Caco-2 (cell line): ENCODE measurements at regions of chr10 and their contacts with region 1.

Region 1: DNA sequence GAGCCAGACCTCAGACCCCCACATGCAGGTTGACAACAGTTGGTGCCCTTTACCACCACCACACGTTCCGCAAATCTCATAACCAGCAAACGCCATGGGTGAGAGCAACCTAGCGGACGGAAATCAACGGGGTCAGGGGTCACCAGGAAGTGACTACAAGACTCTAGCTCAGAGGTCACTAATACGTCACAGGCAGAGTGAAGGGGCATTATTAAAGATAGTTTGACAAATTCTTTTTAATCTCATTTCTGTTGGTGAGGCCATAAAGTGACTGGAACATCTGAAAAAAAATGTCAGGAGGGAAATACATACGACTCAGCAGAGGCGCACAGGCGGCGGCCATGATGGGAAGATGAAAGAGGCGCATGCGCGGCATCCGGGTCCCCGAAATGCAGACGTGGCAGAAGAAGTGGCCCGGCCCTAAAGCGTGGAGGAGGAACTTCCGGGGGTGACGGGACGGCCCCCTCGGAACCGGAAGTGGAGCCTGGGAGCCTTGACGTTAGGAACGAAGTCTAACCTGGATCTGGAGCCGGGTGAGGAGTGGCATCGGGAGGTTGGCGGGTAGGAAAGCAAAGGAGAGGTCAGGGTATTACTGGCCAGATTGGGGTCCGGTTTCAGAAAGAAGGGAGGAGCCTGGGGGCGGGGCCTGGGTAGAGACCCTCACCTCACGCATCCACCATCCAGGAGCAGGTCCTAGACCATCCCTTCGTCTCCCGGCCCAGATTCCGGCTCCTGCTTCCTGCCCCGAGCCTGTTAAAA is at the start of gene SEC24C:
- DNase-seq: peak; percentile 97
- H3K4me3 ChIP-seq: peak within 1 kb of the TSS; percentile 59
- H3K4me3 Mint-ChIP-seq: peak within 1 kb of the TSS; percentile 97
- H3K27ac Mint-ChIP-seq: peak within 1 kb of the TSS; percentile 99
- H3K4me1 ChIP-seq: peaks cover 6% of the 10 kb centered on the region; the same call in 1 of the 2 replicates
- H3K4me1 Mint-ChIP-seq: peaks cover 6% of the 10 kb centered on the region
- H3K27me3 ChIP-seq: no peaks in the 10 kb centered on the region
- H3K27me3 Mint-ChIP-seq: no peaks in the 10 kb centered on the region
- CTCF ChIP-seq: no peak
- total RNA-seq, gene SEC24C: 91.0 and 91.2 TPM in 2 replicates

Region 2: GRCh38 chr10:73730153-73730906 is 13.8 kb before region 1 on chr10:
- CTCF ChIA-PET with region 1: no interaction called
- POLR2A ChIA-PET with region 1: interaction called, 11 read pairs
- intact Hi-C with region 1: loop called (anchors 1 kb)
- DNase-seq: peak; percentile 91 to 95
- H3K4me3 ChIP-seq: peak overlapping the region; percentile 98
- H3K4me3 Mint-ChIP-seq: peak overlapping the region; percentile 88
- H3K27ac Mint-ChIP-seq: peak overlapping the region; percentile 94
- H3K4me1 ChIP-seq: no peaks in the 10 kb centered on the region
- H3K4me1 Mint-ChIP-seq: no peaks in the 10 kb centered on the region
- H3K27me3 ChIP-seq: no peaks in the 10 kb centered on the region
- H3K27me3 Mint-ChIP-seq: no peaks in the 10 kb centered on the region
- CTCF ChIP-seq: no peak

Region 3: DNA sequence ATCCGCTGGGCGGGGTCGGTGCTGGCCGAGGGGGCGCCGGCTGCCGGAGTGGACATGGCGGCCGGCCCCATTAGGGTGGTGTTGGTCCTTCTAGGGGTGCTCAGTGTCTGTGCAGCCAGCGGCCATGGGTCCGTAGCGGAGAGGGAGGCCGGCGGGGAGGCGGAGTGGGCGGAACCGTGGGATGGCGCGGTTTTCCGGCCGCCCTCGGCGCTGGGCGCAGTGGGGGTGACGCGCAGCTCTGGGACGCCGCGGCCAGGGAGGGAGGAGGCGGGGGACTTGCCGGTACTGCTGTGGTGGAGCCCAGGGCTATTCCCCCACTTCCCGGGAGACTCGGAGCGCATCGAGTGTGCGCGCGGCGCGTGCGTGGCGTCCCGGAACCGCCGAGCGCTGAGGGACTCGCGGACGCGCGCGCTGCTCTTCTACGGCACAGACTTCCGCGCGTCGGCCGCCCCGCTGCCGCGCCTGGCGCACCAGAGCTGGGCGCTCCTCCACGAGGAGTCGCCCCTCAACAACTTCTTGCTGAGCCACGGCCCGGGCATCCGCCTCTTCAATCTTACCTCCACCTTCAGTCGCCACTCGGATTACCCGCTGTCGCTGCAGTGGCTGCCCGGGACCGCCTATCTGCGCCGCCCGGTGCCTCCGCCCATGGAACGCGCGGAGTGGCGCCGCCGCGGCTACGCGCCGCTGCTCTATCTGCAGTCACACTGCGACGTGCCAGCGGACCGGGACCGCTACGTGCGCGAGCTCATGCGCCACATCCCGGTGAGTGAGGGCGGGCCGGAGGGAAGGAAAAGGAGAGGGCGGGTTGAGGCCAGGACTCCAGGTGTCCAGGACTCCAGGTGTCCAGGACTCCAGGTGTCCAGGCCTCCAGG is 28.4 kb after region 1 on chr10:
- CTCF ChIA-PET with region 1: no interaction called
- POLR2A ChIA-PET with region 1: interaction called, 6 read pairs
- intact Hi-C with region 1: loop called (anchors 2 kb)
- DNase-seq: peak; percentile 84 to 85
- H3K4me3 ChIP-seq: peak overlapping the region; percentile 91
- H3K4me3 Mint-ChIP-seq: peak overlapping the region; percentile 82
- H3K27ac Mint-ChIP-seq: peak overlapping the region; percentile 75
- H3K4me1 ChIP-seq: peaks cover 7% of the 10 kb centered on the region; the same call in 1 of the 2 replicates
- H3K4me1 Mint-ChIP-seq: peaks cover 21% of the 10 kb centered on the region
- H3K27me3 ChIP-seq: no peaks in the 10 kb centered on the region
- H3K27me3 Mint-ChIP-seq: no peaks in the 10 kb centered on the region
- CTCF ChIP-seq: peak in 1 of 2 experiments; percentile 2